Activated T-helper 2 cell treated with anti-CD3 and anti-CD28 coated beads, Interferon-gamma antibody, Interleukin-2, Interleukin-4, amounts not matched to agents 10 μg/mL and 5 μg/mL and 100 μg/mL, durations not matched to agents 14 hours and 24 hours and 36 hours (primary cell): ENCODE measurements at regions of chr3 and their contacts with region 1.

Region 1: GRCh38 chr3:107271787-107272387 is 105.4 kb upstream of the CCDC54 start:
- DNase-seq: no peak
- H3K4me3 Mint-ChIP-seq: no peak overlapping the region
- H3K27ac Mint-ChIP-seq: no peak overlapping the region
- H3K4me1 Mint-ChIP-seq: peaks cover 3% of the 10 kb centered on the region
- H3K27me3 Mint-ChIP-seq: peaks cover 17% of the 10 kb centered on the region

Region 2: GRCh38 chr3:107142786-107143575 is 128.9 kb before region 1 on chr3:
- intact Hi-C with region 1: no loop called
- DNase-seq: no peak
- H3K4me3 Mint-ChIP-seq: no peak overlapping the region
- H3K27ac Mint-ChIP-seq: no peak overlapping the region
- H3K4me1 Mint-ChIP-seq: no peaks in the 10 kb centered on the region
- H3K27me3 Mint-ChIP-seq: no peaks in the 10 kb centered on the region

Region 3: DNA sequence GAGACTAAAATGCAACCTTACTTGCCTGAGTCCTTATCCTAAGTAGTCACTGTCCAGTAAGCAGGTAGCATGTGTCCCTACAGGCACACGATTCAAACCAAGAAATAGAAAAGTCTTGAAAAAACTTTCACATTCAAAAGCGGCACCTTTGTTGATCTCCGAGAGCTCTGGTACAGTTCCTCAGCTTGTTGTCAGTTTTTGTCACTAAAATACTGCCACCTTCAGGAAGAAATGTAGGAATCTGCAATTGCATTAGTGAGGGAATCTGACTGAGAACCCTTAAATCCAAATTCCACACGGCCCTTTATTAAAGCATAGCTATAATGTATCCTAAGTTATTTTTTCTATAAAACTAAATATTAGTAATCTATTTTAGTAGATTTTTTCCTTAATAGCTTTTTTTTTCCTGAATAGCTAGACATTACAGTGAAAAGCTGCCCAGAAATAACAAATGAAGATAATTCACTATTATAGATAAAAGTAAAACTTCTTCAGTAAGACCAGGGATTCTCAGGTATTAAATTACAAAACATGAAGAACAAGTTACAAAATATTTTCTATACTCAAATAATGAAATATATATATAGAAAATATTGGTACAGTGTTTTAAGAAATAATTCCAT is 149.4 kb after region 1 on chr3:
- intact Hi-C with region 1: loop called (anchors 2 kb)
- DNase-seq: no peak
- H3K4me3 Mint-ChIP-seq: no peak overlapping the region
- H3K27ac Mint-ChIP-seq: no peak overlapping the region
- H3K4me1 Mint-ChIP-seq: peaks cover 2% of the 10 kb centered on the region
- H3K27me3 Mint-ChIP-seq: peaks cover 45% of the 10 kb centered on the region

Region 4: GRCh38 chr3:107429320-107430181 is 157.7 kb after region 1 on chr3:
- intact Hi-C with region 1: loop called (anchors 2 kb)
- DNase-seq: peak; percentile 43
- H3K4me3 Mint-ChIP-seq: peak overlapping the region; percentile 53
- H3K27ac Mint-ChIP-seq: no peak overlapping the region
- H3K4me1 Mint-ChIP-seq: peaks cover 17% of the 10 kb centered on the region
- H3K27me3 Mint-ChIP-seq: peaks cover 49% of the 10 kb centered on the region